H1 (cell line): ENCODE measurements at regions of chr1 and their contacts with region 1.

Region 1: GRCh38 chr1:63758791-63759190 is 15.0 kb upstream of the ROR1 start:
- DNase-seq: no peak
- H3K4me3 ChIP-seq: no peak overlapping the region
- H3K27ac ChIP-seq: no peak overlapping the region
- H3K4me1 ChIP-seq: no peaks in the 10 kb centered on the region; a peak in 1 of 7 replicates
- H3K27me3 ChIP-seq: no peaks in the 10 kb centered on the region
- CTCF ChIP-seq: no peak
- EP300 ChIP-seq: no peak
- POLR2A ChIP-seq: no peak
- RAD21 ChIP-seq: no peak

Region 2: GRCh38 chr1:63746129-63746864 is 12.5 kb before region 1 on chr1:
- CTCF ChIA-PET with region 1: interaction called, 33 read pairs
- POLR2A ChIA-PET with region 1: no interaction called
- DNase-seq: peak in 1 of 2 experiments; percentile 54
- H3K4me3 ChIP-seq: 0 out of 8 replicates have a peak overlapping the region, but pooled peaks of 1 of the 4 experiments have one; percentile 2
- H3K27ac ChIP-seq: no peak overlapping the region
- H3K4me1 ChIP-seq: peaks cover 0 to 9% (median 5%) of the 10 kb centered on the region in 4 experiments; a peak in 6 of 7 replicates
- H3K27me3 ChIP-seq: 0 out of 7 replicates have a peak, but pooled peaks cover 0 to 1% (median 0%) of the 10 kb centered on the region in 4 experiments
- CTCF ChIP-seq: no peak
- EP300 ChIP-seq: no peak
- POLR2A ChIP-seq: no peak
- RAD21 ChIP-seq: no peak

Region 3: GRCh38 chr1:63787875-63788274 is 29.1 kb after region 1 on chr1:
- CTCF ChIA-PET with region 1: no interaction called
- POLR2A ChIA-PET with region 1: no interaction called
- DNase-seq: no peak
- H3K4me3 ChIP-seq: no peak overlapping the region
- H3K27ac ChIP-seq: no peak overlapping the region
- H3K4me1 ChIP-seq: peaks cover 39 to 75% (median 62%) of the 10 kb centered on the region in 4 experiments
- H3K27me3 ChIP-seq: no peaks in the 10 kb centered on the region
- CTCF ChIP-seq: no peak
- EP300 ChIP-seq: no peak
- POLR2A ChIP-seq: no peak
- RAD21 ChIP-seq: no peak